ENCODE measurements at regions of chr19 and their contacts with region 1.

Region 1: GRCh38 chr19:38335949-38336637 is 463 bp downstream of the CATSPERG start:
- DNase-seq: peak; percentile 86

Region 2: GRCh38 chr19:38243279-38243656 is 92.8 kb before region 1 on chr19:
- CTCF ChIA-PET with region 1: interaction called, 11 read pairs
- POLR2A ChIA-PET with region 1: interaction called, 3 read pairs
- DNase-seq: no peak

Region 3: DNA sequence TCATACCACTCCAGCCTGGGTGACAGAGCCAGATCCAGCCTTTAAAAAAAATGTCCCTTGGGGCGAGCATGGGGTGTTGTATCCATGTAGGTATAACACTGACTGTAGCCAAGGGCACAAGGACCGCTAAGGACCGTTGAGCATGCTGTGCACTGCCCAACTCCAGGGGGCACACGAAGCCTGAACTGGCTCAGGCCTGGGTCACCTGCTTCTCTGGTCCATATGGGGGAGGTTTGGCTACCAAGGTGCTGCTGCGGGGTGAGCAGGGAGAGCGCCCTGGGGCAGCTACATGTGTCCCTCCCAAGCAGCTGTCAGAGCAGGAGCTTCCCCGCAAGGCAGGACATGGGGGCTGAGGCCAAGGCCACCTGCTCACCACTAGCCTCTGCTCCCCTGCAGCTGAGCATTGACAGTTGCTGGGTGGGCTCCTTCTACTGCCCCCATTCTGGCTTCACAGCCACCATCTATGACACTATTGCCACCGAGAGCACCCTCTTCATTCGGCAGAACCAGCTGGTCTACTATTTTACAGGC is 15.8 kb after region 1 on chr19:
- CTCF ChIA-PET with region 1: no interaction called
- POLR2A ChIA-PET with region 1: no interaction called
- DNase-seq: no peak